GM10248 (cell line): ENCODE measurements at regions of chr14 and their contacts with region 1.

Region 1: DNA sequence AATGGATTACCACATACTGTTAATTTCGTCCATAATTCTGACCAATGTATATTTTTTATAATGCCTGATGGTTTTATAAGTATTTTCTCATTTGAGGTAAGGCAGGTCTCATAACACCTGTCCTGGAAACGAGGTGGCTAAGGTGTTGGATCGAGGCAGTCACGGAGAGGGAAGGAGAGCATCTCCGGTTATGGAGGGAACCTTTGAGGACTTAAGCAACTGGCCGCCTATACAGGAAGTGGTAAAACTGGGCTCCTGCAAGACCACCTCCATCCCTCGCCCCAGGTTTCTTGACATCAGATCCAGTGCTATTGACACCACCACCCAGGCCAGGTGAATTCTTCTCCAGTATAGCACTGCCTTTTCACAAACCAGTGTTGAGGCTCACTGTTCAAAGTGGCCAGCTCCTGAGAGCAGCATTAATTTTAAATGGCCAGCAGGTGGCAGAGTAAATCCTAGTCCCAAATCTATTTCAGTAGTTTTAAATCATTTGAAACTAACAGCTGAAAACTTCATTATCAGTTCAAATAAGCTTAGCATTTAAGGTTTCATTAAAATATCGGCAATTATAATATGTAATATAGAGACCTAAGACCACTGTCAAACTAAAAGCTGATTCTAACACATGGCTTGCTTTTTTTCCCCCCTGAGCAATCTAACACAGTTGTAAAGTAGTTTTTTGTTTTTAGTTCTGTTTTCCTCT is 100.8 kb downstream of the PPM1A start:
- DNase-seq: peak; percentile 54
- CTCF ChIP-seq: peak; percentile 65

Region 2: DNA sequence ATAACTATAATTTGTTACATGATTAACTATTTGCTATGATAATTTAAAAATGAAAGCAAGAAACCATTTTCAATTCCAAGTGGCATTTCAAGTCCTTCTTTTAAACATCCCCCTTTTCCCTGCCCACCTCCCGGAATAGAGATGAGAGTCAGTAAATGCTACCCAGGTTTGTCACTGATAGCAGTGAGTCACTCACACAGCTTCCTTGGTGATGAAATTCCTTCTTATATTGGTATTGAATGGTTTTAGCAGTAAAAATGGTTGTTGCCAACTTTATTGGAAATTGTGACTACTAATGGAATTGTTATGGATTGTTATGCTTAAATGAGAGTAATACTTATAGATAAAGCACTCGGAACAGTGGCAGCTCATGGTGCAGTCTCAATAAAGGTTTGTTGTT is 10.2 kb before region 1 on chr14:
- CTCF ChIA-PET with region 1: interaction called, 16 read pairs
- POLR2A ChIA-PET with region 1: no interaction called
- DNase-seq: no peak
- CTCF ChIP-seq: no peak

Region 3: GRCh38 chr14:60363275-60363674 is 13.5 kb after region 1 on chr14:
- CTCF ChIA-PET with region 1: interaction called, 33 read pairs
- POLR2A ChIA-PET with region 1: no interaction called
- DNase-seq: no peak
- CTCF ChIP-seq: no peak

Region 4: DNA sequence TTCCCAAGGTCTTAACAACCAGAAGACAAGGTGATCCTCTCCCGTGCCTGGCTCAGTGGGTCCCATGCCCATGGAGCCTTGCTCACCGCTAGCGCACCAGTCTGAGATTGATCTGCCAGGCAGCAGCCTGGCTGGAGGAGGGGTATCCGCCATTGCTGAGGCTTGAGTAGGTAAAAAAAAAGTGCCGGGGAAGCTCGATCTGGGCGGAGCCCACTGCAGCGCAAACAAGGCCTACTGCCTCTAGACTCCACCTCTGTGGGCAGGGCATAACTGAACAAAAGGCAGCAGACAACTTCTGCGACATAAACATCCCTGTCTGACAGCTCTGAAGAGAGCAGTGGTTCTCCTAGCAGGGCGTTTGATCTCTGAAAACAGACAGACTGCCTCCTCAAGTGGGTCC is 32.1 kb after region 1 on chr14:
- CTCF ChIA-PET with region 1: no interaction called
- POLR2A ChIA-PET with region 1: no interaction called
- DNase-seq: no peak
- CTCF ChIP-seq: no peak

Region 5: GRCh38 chr14:60561845-60562746 is 212.3 kb after region 1 on chr14:
- CTCF ChIA-PET with region 1: interaction called, 29 read pairs
- POLR2A ChIA-PET with region 1: no interaction called
- DNase-seq: peak; percentile 41
- CTCF ChIP-seq: peak; percentile 85